Left lung (tissue), 14 donors: ENCODE measurements at regions of chr11 and their contacts with region 1.

Region 1: DNA sequence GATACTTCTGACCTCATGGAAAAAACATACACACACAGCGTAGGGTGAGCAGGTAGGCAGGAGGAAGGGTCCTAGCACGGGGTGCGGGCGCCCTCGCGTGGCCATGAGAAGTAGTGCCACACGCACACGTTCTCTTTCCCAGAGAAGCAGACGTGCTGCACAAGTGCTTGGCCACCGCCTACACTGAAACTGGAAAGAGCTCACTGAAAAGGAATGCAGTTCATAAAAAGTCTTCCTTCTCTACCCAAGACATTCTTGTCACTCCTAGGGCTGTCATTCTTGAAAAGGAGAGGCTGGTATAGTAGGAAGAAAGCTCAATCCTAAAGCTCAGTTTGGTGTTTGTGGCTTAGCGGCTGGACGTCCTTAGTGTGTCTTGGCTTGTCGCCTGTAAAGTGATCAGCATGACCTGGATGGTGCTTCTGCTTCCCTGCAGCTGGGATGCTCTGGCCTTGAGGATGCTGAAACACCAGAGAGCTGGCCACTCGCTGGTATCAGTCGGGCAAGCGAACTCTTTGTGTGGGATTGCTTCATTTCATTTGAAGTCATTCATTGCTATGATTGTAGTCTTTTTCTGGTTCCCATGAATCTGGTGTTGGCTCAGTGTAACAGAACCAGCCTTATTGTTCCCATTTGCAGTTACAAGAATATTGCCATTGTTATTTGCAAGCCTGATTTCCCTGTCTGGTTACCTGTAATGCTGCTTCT is 303.8 kb downstream of the NTM start:
- DNase-seq: peak; percentile 60 to 92 (median 70)
- ATAC-seq: peak; percentile 98
- H3K4me3 ChIP-seq: no peak overlapping the region
- H3K27ac ChIP-seq: no peak overlapping the region
- H3K4me1 ChIP-seq: no peaks in the 10 kb centered on the region
- H3K27me3 ChIP-seq: peaks cover 0 to 8% of the 10 kb centered on the region in 2 donors
- CTCF ChIP-seq: peak; percentile 87 to 91

Region 2: GRCh38 chr11:131064373-131064991 is 609.7 kb before region 1 on chr11:
- intact Hi-C with region 1: loop called in 1 of 2 experiments (anchors 10 kb)
- DNase-seq: peak in 3 of 4 donors; percentile 33 to 63 (median 49)
- ATAC-seq: peak; percentile 83
- H3K4me3 ChIP-seq: no peak overlapping the region
- H3K27ac ChIP-seq: no peak overlapping the region
- H3K4me1 ChIP-seq: no peaks in the 10 kb centered on the region
- H3K27me3 ChIP-seq: peaks cover 0 to 13% of the 10 kb centered on the region in 2 donors
- CTCF ChIP-seq: peak; percentile 60 to 61

Region 3: GRCh38 chr11:131579932-131580387 is 94.2 kb before region 1 on chr11:
- intact Hi-C with region 1: no loop called
- DNase-seq: no peak
- ATAC-seq: peak; percentile 45
- H3K4me3 ChIP-seq: no peak overlapping the region
- H3K27ac ChIP-seq: no peak overlapping the region
- H3K4me1 ChIP-seq: no peaks in the 10 kb centered on the region
- H3K27me3 ChIP-seq: peaks cover 0 to 30% of the 10 kb centered on the region in 2 donors
- CTCF ChIP-seq: peak; percentile 13 to 15

Region 4: GRCh38 chr11:132289590-132290256 is 615.5 kb after region 1 on chr11:
- intact Hi-C with region 1: no loop called
- DNase-seq: no peak
- ATAC-seq: no peak
- H3K4me3 ChIP-seq: no peak overlapping the region
- H3K27ac ChIP-seq: no peak overlapping the region
- H3K4me1 ChIP-seq: no peaks in the 10 kb centered on the region
- H3K27me3 ChIP-seq: no peaks in the 10 kb centered on the region
- CTCF ChIP-seq: no peak